ENCODE measurements at regions of chr3 and their contacts with region 1.

Region 1: GRCh38 chr3:49339945-49340800 is at the start of gene USP4:
- DNase-seq: peak; percentile 63 to 94
- H3K4me3 ChIP-seq: peak within 1 kb of the TSS; percentile 75 to 85
- H3K27ac ChIP-seq: peak within 1 kb of the TSS; percentile 93 to 98
- H3K4me1 ChIP-seq: peaks cover 4 to 17% of the 10 kb centered on the region in 2 donors
- H3K27me3 ChIP-seq: no peaks in the 10 kb centered on the region
- CTCF ChIP-seq: peak; percentile 35 to 47 (median 47)
- total RNA-seq, gene USP4: 94.7 TPM

Region 2: DNA sequence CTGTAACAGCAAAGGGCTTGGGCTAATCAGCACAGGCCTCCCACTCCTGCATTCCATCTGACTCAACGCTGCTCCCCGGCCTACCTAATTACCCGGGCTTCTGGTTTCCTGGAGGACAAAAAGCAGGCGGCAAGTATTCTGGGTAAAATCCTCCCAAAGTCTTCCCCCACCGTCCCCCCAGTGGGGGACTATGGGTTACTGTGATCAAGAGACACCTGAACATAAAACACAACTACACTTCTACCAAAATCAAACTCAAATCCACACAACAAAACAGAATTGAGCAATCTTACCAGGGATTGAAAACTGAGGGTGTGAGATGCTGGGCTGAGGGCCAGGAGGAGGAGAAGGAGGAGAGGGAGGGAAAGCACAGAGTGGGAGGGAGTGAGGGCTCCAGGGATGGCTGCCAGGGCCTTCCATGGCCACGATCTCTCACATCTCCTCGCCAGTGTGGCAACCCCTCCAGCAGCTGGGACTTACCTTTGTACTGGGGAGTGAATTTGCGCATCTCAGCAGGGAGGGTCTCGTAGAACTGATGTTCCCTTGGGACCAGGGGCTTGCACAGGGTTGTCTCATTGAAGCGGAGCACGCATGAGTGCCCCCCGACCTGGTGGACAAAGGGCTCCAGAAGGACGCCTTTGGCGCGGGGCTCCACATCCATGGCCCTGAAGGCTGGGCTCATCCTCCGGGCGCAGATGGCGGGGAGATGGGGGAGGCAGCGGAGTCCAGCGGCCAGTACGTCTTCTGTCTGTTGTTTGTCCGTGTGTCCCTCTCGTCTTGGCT is 645.4 kb before region 1 on chr3:
- intact Hi-C with region 1: no loop called
- DNase-seq: peak in 1 of 2 donors; percentile 91
- H3K4me3 ChIP-seq: peak overlapping the region; percentile 41 to 61
- H3K27ac ChIP-seq: peak overlapping the region; percentile 93 to 96
- H3K4me1 ChIP-seq: peaks cover 9 to 23% of the 10 kb centered on the region in 2 donors
- H3K27me3 ChIP-seq: no peaks in the 10 kb centered on the region
- CTCF ChIP-seq: no peak

Region 3: DNA sequence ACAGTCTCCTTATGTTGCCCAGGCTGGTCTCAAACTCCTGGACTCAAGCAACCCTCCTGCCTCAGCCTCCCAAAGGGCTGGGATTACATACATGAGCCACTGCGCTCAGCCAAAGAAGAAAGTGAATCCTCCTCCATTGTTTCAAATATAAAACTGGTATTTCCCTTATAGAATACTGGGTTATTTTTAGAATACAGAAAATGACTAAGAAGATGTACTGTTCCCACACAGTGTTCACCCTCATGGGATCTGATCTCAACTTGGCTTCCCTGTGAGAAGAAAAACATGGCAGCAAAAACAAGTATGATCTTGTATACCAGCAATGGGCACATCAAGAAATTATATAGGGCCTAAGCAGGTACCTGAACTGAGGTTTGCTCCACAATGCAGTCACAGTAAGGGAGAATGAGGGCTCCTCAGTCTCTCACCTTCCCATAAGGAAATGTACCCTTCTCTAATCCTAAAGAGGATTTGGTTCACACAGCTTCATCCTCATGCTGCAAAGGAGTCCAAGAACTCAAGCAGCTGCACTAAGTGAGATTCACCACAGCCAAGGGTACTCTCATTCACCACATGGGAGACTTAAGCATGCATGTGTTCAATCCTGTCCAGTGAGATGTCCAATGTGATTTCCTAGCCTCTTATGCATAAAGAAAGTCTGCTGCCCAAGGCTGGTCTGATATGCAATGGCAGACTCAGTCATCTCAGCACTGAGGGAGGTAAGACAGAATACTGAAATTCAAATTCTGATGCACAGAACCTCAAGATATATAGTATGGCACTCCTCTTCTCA is 26.1 kb before region 1 on chr3:
- intact Hi-C with region 1: no loop called
- DNase-seq: no peak
- H3K4me3 ChIP-seq: no peak overlapping the region
- H3K27ac ChIP-seq: peak overlapping the region in 1 of 2 donors; percentile 19
- H3K4me1 ChIP-seq: no peaks in the 10 kb centered on the region
- H3K27me3 ChIP-seq: no peaks in the 10 kb centered on the region
- CTCF ChIP-seq: no peak

Region 4: GRCh38 chr3:49358217-49358883 is 18.2 kb after region 1 on chr3 and contains the start of gene GPX1:
- intact Hi-C with region 1: loop called (anchors 1 kb)
- DNase-seq: peak; percentile 79 to 97
- H3K4me3 ChIP-seq: peak within 1 kb of the TSS; percentile 84 to 85
- H3K27ac ChIP-seq: peak within 1 kb of the TSS; percentile 91 to 95
- H3K4me1 ChIP-seq: peaks cover 0 to 16% of the 10 kb centered on the region in 2 donors
- H3K27me3 ChIP-seq: no peaks in the 10 kb centered on the region
- CTCF ChIP-seq: no peak
- total RNA-seq, gene GPX1: 422 TPM

Region 5: DNA sequence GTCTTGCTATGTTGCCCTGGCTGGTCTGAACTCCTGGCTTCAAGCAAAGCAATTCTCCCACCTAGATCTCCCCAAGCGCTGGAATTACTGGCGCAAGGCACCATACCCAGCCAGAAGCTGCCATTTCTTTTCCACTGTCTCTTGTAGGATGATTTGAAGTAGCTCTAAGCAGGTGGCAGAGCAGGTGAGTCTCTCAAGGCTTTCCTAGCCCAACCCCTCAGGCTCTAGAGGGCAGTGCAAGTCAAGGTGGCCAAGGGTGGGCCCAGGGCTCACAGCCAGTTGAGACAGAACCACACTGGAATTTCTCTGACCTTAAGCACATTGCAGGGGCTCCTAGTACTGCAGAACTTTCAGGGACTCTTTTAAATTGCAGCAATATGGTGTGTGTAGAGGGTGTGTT is 114.3 kb after region 1 on chr3:
- intact Hi-C with region 1: loop called (anchors 1 kb)
- DNase-seq: no peak
- H3K4me3 ChIP-seq: no peak overlapping the region
- H3K27ac ChIP-seq: peak overlapping the region; percentile 12 to 54
- H3K4me1 ChIP-seq: peaks cover 0 to 3% of the 10 kb centered on the region in 2 donors
- H3K27me3 ChIP-seq: no peaks in the 10 kb centered on the region
- CTCF ChIP-seq: peak in 1 of 3 experiments; percentile 39